A673 (cell line): ENCODE measurements at regions of chr17 and their contacts with region 1.

Region 1: GRCh38 chr17:60142872-60143499 is 6.8 kb upstream of the CA4 start:
- DNase-seq: peak; percentile 94
- H3K4me3 ChIP-seq: peak overlapping the region; percentile 36
- H3K27ac ChIP-seq: no peak overlapping the region
- H3K4me1 ChIP-seq: peaks cover 9% of the 10 kb centered on the region
- H3K27me3 ChIP-seq: peaks cover 43% of the 10 kb centered on the region
- CTCF ChIP-seq: peak; percentile 91

Region 2: GRCh38 chr17:60231234-60231633 is 88.2 kb after region 1 on chr17:
- CTCF ChIA-PET with region 1: interaction called, 12 read pairs
- POLR2A ChIA-PET with region 1: no interaction called
- intact Hi-C with region 1: loop called (anchors 1 kb)
- DNase-seq: peak; percentile 64
- H3K4me3 ChIP-seq: peak overlapping the region; percentile 15
- H3K27ac ChIP-seq: peak overlapping the region; percentile 13
- H3K4me1 ChIP-seq: peaks cover 9% of the 10 kb centered on the region
- H3K27me3 ChIP-seq: no peaks in the 10 kb centered on the region
- CTCF ChIP-seq: peak; percentile 71

Region 3: DNA sequence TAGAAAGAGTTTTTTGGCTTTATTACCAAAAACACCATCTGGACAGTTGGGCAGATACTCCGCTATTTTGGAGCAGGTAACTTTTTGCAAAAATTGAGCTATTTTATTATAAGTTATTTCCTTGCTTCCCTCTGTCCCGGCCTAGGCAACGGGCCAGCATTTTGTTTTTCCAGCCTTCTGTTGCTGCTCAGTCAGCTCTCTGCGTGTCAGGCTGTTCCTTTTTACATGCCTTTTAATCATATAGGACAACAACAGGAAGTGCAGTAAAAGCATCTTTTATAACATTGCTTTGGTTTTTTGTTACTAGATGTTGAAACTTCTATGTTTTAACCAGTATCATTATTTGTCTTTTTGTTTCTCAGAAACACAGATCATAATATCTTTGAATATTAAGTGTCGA is 487.4 kb after region 1 on chr17:
- CTCF ChIA-PET with region 1: no interaction called
- POLR2A ChIA-PET with region 1: no interaction called
- intact Hi-C with region 1: loop called (anchors 10 kb)
- DNase-seq: no peak
- H3K4me3 ChIP-seq: no peak overlapping the region
- H3K27ac ChIP-seq: no peak overlapping the region
- H3K4me1 ChIP-seq: no peaks in the 10 kb centered on the region
- H3K27me3 ChIP-seq: no peaks in the 10 kb centered on the region
- CTCF ChIP-seq: no peak